Right ventricle myocardium superior (tissue), 1 donor: ENCODE measurements at regions of chr12 and their contacts with region 1.

Region 1: GRCh38 chr12:120971299-120972179 is 6.8 kb upstream of the HNF1A start:
- DNase-seq: no peak
- ATAC-seq: peak; percentile 86

Region 2: DNA sequence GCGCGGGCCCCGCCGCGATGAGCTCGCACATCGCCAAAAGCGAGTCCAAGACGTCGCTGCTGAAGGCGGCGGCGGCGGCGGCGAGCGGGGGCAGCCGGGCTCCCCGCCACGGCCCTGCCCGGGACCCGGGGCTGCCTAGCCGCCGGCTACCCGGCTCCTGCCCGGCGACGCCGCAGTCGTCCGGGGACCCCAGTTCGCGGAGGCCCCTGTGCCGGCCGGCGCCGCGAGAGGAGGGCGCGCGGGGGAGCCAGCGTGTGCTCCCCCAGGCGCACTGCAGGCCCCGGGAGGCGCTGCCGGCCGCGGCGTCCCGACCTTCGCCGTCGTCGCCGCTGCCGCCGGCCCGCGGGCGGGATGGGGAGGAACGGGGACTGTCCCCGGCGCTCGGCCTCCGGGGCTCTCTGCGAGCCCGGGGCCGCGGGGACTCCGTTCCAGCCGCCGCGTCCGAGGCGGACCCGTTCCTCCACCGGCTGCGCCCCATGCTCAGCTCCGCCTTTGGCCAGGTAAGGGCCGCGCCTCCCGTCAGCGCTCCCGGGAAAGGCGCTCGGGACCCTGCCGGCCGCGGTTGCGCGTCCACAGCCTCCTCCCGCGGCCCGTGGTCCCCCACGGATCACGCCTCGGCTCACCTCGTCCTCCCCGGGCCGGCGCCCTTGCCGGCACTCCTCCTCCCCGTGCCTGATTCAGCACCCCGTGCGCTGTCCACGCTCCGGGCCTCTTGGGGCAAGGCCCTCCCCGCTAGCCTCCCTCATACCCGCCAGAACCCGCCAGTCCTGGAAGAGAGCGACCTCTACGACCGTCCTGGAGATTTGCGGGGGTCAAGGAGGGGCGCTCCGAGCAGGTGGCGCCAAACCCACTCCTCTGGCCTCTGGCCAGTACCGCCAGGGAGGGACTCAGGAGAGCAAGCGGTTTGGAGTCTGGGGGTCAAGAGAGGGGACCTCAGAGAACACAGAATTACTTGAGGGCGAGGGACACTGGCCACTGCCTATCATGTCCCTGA is 330.4 kb before region 1 on chr12:
- intact Hi-C with region 1: loop called (anchors 5 kb)
- DNase-seq: peak; percentile 74
- ATAC-seq: peak; percentile 90

Region 3: DNA sequence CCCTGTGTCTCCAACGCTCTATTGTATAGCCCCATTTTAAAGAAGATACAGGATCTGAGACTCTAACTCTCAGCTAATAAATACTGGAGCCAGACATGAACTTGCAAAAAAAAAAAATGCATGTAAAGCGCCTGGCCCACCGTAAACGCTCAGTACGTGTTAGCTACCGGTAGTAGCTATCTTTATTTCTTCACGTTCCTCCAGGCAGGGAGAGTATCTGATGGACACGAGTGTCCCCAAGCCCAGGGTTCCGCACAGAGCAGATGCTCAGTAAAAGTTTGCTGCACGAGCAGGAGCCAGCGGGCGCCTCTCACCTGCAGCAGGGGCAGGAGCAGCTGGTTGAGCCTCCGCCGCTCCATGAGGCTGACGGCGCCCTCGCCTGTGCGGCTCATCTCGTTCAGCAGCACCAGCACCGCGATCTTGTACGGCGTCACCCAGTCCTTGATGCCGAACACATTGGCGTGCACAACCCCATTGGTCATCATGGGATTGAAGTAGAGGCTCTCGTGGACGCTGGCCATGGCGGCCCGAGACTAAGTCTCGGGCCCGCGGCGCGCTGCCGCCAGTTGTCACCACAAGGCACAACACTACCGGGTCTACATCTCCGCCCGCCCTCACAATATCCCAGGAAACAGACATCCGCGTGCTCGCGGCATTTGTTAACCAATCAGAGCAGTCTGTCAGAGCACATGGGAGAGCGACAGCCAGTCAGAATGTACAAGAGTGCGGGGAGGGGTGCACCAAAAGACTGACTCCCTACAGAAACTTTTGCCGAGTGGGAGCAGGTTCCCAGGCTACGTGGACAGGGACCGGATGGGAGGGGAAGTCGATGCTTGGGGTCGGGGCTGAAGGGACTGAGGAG is 380.5 kb after region 1 on chr12 and contains the start of gene ANAPC5:
- intact Hi-C with region 1: no loop called
- DNase-seq: peak; percentile 96
- ATAC-seq: peak; percentile 100
- total RNA-seq, gene ANAPC5: 57.4 TPM

Region 4: GRCh38 chr12:121399391-121400331 is 428.1 kb after region 1 on chr12 and contains the start of gene RNF34:
- intact Hi-C with region 1: no loop called
- DNase-seq: peak; percentile 100
- ATAC-seq: peak; percentile 99
- total RNA-seq, gene RNF34: 19.2 TPM